Right ventricle myocardium superior (tissue), 1 donor: ENCODE measurements at regions of chr12 and their contacts with region 1.

Region 1: GRCh38 chr12:101830367-101831325 is at the start of gene GNPTAB:
- DNase-seq: peak; percentile 96
- ATAC-seq: peak; percentile 97
- total RNA-seq, gene GNPTAB: 52.9 TPM

Region 2: GRCh38 chr12:101414533-101415119 is 416.0 kb before region 1 on chr12:
- intact Hi-C with region 1: loop called (anchors 10 kb)
- DNase-seq: no peak
- ATAC-seq: peak; percentile 52

Region 3: DNA sequence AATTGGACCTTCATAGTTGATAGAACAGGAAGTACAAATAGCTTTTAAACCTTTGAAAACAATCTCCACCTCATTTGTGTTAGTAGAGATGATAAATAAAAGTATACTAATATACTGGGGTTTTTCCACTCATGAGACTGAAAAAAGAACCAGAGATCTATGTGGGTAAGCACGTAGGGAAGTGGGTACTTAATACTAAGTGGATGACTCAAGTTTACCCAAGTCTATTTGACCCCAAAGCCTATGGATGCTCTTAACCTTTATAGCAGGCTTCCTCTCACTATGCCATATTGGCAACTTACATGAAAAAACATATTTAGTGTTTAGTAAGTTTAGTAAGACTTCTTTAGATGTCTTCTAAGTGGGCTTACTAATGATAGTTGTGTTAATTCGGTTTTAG is 182.5 kb before region 1 on chr12:
- intact Hi-C with region 1: no loop called
- DNase-seq: no peak
- ATAC-seq: no peak

Region 4: DNA sequence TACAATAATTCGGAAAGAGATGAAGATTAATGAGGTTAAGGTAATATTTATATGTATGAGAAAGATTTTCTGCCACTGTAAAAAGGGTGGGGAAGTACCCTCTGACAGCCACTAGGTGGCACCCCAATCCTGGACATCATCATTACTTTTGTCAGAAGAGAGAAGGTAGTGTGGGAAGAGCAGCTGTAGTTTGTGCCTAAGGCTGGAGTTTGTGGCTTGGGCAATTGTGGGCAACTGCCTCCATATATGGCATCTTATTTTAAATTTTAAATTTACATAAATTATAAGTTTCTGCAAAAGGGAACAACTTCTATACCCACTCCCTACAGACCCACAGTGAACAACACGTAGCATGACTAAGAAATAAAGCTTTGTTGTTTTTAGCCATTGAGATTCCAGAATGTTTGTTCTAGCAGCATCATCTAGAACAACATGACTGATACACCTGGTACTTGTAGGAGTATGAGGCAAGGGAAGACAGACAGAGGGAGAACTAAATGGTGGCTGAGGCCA is 56.9 kb before region 1 on chr12:
- intact Hi-C with region 1: loop called (anchors 2 kb)
- DNase-seq: peak; percentile 56
- ATAC-seq: peak; percentile 82

Region 5: DNA sequence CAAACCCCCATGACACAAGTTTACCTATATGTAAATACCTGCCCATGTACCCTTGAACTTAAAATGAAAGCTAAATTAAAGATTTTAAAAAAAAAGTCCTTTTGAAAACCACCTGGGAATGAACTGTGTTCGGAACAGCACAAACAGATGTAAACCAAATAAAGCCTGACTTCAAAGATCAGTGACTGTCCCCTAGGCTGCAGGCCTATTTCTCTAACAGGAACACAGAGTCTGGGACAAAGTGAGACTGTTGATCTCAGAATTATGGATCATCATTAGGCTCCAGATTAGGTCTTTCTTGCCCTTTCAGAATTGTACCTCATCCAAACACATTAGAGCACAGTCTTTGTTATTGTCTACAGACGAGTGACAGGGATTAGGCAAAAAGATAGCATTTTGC is 1031.8 kb after region 1 on chr12:
- intact Hi-C with region 1: no loop called
- DNase-seq: no peak
- ATAC-seq: no peak

Region 6: GRCh38 chr12:103175617-103176016 is 1345.0 kb after region 1 on chr12:
- intact Hi-C with region 1: no loop called
- DNase-seq: no peak
- ATAC-seq: no peak